ENCODE measurements at regions of chr11 and their contacts with region 1.

Region 1: GRCh38 chr11:14892036-14892567 is at the start of gene CYP2R1:
- DNase-seq: peak; percentile 97
- ATAC-seq: peak; percentile 99
- total RNA-seq, gene CYP2R1: 7.0 TPM

Region 2: GRCh38 chr11:14499554-14500180 is 392.4 kb before region 1 on chr11 and contains the start of gene COPB1:
- intact Hi-C with region 1: no loop called
- DNase-seq: peak; percentile 97
- ATAC-seq: peak; percentile 99
- total RNA-seq, gene COPB1: 42.1 TPM

Region 3: DNA sequence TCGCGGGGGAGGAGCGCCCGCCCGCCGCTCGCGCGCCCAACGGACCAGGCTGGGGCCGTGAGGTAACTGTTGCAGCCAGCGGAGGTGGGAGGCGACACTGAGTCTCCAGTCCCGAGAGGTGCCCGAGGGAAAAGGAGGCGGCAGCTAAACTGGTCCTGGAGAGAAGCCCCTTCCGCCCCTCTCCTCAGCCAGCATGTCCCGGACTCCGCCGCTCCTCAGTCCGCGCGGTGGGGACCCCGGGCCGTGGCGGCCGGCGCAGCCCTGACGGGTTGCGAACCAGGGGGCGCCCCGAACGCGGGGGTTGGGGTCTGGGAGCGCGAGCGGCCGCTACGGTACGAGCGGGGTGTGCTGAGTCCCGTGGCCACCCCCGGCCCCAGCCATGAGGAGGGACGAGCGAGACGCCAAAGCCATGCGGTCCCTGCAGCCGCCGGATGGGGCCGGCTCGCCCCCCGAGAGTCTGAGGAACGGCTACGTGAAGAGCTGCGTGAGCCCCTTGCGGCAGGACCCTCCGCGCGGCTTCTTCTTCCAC is 248.3 kb before region 1 on chr11 and contains the start of gene PDE3B:
- intact Hi-C with region 1: loop called (anchors 5 kb)
- DNase-seq: peak; percentile 93
- ATAC-seq: peak; percentile 95
- total RNA-seq, gene PDE3B: 4.5 TPM

Region 4: GRCh38 chr11:14819596-14819995 is 72.5 kb before region 1 on chr11:
- intact Hi-C with region 1: no loop called
- DNase-seq: no peak
- ATAC-seq: no peak